ENCODE measurements at regions of chr7 and their contacts with region 1.

Region 1: GRCh38 chr7:55255496-55256435 is 109.4 kb upstream of the LANCL2 start:
- DNase-seq: no peak
- H3K4me3 ChIP-seq: peak overlapping the region; percentile 68
- CTCF ChIP-seq: peak; percentile 96

Region 2: GRCh38 chr7:54758702-54759592 is 496.8 kb before region 1 on chr7 and contains the start of gene SEC61G:
- CTCF ChIA-PET with region 1: interaction called, 41 read pairs
- POLR2A ChIA-PET with region 1: interaction called, 5 read pairs
- DNase-seq: peak; percentile 87
- H3K4me3 ChIP-seq: peak within 1 kb of the TSS; percentile 86
- CTCF ChIP-seq: no peak

Region 3: GRCh38 chr7:54839538-54840213 is 416.1 kb before region 1 on chr7:
- CTCF ChIA-PET with region 1: interaction called, 21 read pairs
- POLR2A ChIA-PET with region 1: no interaction called
- DNase-seq: no peak
- H3K4me3 ChIP-seq: no peak overlapping the region
- CTCF ChIP-seq: peak; percentile 75

Region 4: DNA sequence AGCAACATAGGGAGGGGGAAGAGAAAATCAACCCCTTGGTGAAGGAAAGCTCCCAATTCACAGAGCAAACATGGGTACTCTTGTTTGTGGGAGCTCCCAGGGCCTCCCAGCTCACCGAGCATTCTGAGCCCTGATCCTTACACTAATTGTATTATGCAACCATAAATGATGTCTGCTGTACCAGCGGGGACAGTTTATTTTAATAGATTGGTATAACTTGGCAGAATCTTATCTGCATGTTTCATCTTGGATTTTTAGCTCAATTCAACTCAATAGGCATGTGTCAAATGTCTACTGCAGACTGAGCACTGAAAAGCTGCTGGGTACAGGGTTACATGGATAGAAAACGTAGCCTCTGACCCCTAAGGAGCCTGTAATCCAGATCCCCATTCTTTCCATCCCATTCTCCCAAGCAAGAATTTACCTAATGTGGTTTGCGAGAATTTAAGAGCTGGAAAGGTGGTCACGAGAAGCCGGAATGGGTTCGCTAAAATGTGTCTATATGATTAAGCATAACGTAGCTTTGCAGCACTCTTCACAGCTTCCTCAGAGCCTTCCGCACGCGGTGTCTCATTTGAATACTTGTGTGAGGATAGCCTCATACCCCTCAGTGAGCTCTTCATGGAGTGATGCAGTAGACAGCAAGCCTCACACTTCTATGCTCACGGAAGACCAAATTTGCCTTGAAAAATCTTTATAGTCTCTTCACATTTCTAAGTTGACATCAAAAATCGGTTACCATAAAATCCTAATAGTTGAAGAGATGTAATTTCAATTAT is 218.6 kb before region 1 on chr7:
- CTCF ChIA-PET with region 1: interaction called, 29 read pairs
- POLR2A ChIA-PET with region 1: no interaction called
- DNase-seq: no peak
- H3K4me3 ChIP-seq: no peak overlapping the region
- CTCF ChIP-seq: no peak

Region 5: DNA sequence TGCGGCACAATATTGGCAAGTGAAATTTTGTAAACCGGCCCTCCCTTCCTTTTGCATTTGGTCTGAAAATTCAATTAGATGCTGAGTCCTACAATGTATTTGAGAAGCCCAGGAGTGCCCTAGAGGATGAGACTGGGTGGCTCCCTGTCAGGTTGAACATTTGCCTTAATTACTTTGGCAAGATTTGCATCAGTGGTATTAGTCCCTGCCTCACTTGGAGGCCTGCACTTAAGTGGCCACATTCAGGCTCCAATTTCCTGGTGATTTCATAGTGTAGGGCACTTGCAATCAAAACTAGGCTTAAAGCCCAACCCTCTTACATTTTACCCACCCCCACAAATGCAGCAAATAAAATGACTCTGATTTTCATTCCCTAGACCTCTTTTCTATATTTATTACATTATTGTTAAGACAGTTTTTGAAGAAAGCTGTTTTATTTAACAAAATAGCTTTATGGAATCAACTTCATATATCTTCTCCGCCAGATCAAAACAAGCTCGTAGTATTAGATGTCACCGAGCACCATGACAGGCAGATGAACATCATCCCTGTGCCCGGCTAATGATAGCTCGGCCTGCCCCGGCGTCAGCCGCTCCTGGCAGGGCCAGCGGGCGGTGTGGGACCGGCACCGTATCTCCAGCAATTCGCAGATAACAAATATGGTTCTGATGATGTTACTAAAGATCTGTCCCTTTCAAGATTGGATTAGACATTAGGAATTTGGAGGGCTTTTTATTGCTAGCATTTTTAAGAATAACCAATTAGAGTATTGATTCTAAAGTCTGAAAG is 163.4 kb before region 1 on chr7:
- CTCF ChIA-PET with region 1: interaction called, 10 read pairs
- POLR2A ChIA-PET with region 1: no interaction called
- DNase-seq: no peak
- H3K4me3 ChIP-seq: no peak overlapping the region
- CTCF ChIP-seq: no peak

Region 6: GRCh38 chr7:55158541-55159382 is 97.0 kb before region 1 on chr7:
- CTCF ChIA-PET with region 1: interaction called, 19 read pairs
- POLR2A ChIA-PET with region 1: no interaction called
- DNase-seq: peak; percentile 83
- H3K4me3 ChIP-seq: no peak overlapping the region
- CTCF ChIP-seq: no peak

Region 7: DNA sequence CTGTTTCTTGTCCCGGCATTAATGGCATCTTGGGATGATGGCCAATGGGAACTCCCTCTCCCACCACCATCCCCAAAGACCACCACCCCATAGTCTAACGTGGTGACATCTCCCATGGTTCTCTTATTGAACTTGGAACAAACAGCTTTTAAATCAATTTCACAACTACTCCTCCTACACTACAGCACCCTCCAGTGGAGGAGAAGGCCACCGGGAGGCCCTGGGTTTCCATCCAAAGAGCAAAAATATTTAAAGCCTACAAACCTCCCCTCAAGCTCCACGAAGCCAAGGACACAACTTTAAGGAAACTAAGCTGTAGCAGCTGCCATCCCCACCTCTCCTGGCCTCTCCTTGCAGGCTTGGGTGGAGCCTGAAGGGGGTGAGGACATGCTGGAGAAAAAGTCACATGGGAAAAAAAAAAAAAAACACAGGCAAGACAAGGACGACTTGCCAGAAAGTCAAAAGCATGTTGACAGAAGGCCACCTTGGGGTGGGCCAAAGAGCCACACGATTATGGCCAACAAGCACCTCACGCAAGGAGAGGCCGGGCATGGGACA is 15.4 kb after region 1 on chr7:
- CTCF ChIA-PET with region 1: interaction called, 49 read pairs
- POLR2A ChIA-PET with region 1: no interaction called
- DNase-seq: no peak
- H3K4me3 ChIP-seq: no peak overlapping the region
- CTCF ChIP-seq: peak; percentile 56